ENCODE measurements at regions of chr14 and their contacts with region 1.

Region 1: DNA sequence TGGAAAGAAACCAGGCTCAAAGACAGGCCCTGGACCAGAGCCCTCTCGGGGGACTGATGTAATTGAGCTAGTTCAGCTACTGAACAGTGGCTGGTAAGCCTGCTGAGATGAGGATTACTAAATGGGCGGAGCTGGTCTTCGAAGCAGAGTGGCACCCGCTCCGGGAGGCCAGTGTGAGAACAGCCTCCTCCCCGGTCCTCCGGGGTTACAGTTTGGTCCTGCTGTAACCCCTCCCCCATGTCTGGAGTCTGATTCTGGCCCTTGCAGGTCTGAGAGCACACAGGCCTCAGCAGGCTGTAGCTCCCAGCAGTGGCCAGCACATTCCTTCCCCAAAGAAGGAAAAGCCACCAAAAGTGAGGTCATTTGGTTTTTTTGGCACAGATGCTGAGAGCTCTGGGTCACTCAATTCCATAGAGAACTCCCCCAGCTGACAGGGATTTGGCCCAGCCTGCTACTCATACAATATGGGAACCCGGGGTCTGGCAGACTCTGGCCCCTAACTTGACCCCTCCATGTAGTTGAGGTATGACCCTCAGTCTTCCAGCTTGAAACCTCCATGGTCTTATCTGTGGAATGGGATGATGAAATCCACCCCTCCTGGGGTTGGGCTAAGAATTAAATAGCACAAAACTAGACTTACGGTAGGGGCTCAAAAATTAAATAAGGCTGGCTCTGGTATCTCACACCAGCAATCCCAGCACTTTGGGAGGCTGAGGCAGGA is 39.0 kb downstream of the ACTN1 start:
- DNase-seq: peak in 2 of 10 donors; percentile 35 to 36
- ATAC-seq: peak; percentile 59 to 61
- H3K4me3 Mint-ChIP-seq: peak overlapping the region; percentile 16 to 83 (median 62)
- H3K27ac Mint-ChIP-seq: peak overlapping the region; percentile 78 to 99 (median 92)
- H3K4me1 Mint-ChIP-seq: peaks cover 54 to 99% (median 89%) of the 10 kb centered on the region in 4 donors
- H3K27me3 Mint-ChIP-seq: no peaks in the 10 kb centered on the region

Region 2: DNA sequence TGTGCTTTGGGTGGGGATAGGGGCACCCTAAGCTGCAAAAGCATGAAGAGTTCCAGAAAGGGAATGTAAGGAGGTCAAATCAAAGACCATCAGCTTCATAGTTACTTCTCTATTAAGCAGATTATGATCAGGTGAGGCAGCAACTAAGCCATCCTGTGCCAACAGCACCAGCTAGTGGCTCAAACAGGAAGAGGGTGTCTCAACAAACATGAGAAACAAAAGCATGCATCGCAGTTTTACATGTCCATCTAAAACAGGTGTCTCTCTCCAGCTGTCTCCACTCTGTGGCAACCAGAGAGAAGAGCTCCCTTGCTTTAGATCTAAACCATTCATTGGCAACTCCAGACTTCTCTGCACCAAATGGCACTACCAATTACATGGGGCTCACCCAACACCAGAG is 13.8 kb before region 1 on chr14:
- POLR2A ChIA-PET with region 1: interaction called, 21 read pairs
- DNase-seq: peak in 1 of 10 donors; percentile 43
- ATAC-seq: no peak
- H3K4me3 Mint-ChIP-seq: peak overlapping the region in 5 of 10 donors; percentile 3 to 63 (median 9)
- H3K27ac Mint-ChIP-seq: peak overlapping the region; percentile 49 to 98 (median 90)
- H3K4me1 Mint-ChIP-seq: peaks cover 50 to 96% (median 85%) of the 10 kb centered on the region in 4 donors
- H3K27me3 Mint-ChIP-seq: no peaks in the 10 kb centered on the region

Region 3: DNA sequence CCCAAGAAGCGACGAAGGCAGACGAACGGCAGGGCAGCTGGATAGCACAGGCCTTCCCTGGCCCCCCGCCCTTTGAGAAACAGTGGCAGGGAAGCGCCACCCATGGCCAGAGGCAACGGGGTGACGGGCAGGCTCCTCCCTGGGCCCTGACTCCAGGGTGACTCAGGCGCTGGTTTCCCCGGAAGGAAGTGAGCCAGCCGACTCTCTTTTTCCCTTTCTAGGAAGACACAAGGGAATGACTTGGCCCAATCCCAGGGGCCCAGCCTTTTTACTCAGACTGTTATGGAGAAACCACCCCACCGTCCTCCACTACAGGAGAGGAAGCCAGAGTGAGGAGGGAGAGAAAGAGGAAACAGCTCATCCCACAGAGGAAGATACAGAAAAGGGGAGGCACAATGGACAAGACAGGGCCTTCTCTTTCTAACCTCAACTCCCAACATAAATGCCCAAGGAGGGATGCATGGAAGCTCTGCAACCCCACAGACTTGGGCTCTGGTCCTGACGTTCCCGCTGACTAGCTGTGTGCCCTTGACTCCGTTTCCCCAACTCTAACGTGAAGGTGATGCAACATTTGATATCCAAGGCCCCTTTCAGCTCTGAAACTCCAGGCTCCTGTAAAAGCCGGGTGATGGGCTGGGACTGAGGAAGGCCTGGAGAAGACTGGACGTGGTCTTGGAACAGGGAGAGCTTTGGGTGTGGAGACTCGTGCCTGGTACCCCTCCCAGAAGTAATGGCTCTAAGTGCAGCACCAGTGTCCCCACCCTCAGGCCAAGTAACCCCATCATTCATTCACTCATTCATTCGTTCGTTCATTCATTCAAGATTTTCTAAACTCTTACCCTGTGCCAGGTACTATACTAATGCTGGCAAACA is 11.2 kb after region 1 on chr14:
- POLR2A ChIA-PET with region 1: interaction called, 469 read pairs
- DNase-seq: no peak
- ATAC-seq: no peak
- H3K4me3 Mint-ChIP-seq: peak overlapping the region in 9 of 10 donors; percentile 53 to 90 (median 77)
- H3K27ac Mint-ChIP-seq: peak overlapping the region; percentile 86 to 100 (median 95)
- H3K4me1 Mint-ChIP-seq: peaks cover 60 to 94% (median 93%) of the 10 kb centered on the region in 4 donors
- H3K27me3 Mint-ChIP-seq: no peaks in the 10 kb centered on the region

Region 4: DNA sequence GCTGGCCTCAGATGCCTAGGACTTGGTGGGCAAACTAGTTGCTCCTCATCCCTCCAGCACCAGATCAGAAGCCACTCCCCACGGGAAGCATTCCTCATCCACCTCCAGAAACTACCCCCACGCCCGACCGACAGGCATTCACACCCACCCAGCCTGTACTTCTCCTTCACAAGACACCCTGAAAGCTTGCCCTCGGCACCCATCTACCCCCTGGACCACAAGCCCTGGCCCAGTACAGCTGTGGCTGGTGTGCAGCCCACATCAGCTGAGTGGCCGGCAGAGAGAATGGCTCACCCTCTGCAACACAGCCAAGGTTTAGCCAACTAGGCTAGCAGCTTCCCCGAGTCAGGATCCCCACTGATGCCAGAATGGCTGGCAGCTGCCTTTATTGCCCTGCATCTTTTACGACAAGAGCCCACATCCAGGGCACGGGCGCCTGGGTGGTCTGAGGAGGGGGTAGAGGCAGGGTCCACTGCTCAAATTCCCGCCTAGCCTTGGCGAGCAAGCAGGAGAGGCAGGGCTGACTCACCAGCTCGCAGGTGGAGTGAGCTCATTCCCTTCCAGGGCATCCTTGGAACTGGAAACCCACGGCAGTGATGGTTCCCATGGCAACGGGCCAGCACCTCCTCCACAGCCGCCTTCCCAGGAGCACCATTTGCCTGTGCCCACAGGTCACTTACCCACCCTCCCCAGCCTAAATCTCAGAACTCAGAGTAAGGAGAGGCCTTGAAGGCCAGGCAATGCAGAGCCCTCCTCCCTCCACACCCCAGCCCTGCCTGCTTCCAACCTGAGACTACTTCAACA is 21.9 kb after region 1 on chr14:
- POLR2A ChIA-PET with region 1: interaction called, 469 read pairs
- DNase-seq: no peak
- ATAC-seq: no peak
- H3K4me3 Mint-ChIP-seq: peak overlapping the region in 8 of 10 donors; percentile 23 to 94 (median 67)
- H3K27ac Mint-ChIP-seq: peak overlapping the region; percentile 93 to 100 (median 96)
- H3K4me1 Mint-ChIP-seq: peaks cover 50 to 98% (median 96%) of the 10 kb centered on the region in 4 donors
- H3K27me3 Mint-ChIP-seq: no peaks in the 10 kb centered on the region

Region 5: DNA sequence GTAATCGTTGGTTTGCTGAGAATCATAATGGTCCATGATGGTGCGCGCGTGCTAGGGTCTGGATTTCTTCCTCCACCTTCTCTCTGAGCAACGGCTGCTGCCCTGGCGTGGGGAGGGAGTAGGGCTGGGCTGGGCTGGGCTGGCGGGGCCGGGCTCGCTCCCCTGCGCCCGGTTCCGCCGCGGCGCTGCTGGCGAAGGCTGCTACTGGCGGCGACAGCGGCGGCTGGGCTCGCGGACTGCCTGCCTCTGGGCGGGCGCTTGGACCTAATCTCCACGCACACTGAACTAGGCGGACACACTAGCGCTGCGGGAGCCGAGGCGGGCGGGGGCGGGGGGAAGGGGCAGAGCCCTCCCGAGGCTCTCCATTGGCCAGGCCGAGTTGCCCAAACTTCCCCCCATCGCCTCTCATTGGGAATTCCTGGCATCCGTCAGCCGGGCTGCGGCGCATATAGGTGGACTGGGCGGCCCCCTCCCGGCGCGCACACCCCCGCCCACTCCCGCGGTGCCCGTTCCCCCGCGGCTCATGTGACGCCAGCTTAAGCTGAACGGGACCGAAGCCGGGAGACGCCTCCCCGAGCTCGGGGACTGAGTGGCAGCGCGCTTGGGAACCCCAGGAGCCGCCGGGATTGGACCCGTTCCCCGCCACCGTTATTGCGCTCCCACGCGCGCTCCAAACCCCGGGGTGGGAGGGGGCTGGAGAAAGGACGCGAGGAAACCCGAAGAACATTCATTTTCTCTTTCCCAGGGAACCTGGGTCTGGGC is 39.1 kb after region 1 on chr14 and contains the start of gene ACTN1:
- POLR2A ChIA-PET with region 1: interaction called, 446 read pairs
- DNase-seq: peak; percentile 32 to 86 (median 74)
- ATAC-seq: peak; percentile 48 to 53
- H3K4me3 Mint-ChIP-seq: peak within 1 kb of the TSS; percentile 92 to 99 (median 96)
- H3K27ac Mint-ChIP-seq: peak within 1 kb of the TSS; percentile 92 to 100 (median 100)
- H3K4me1 Mint-ChIP-seq: peaks cover 38 to 60% (median 52%) of the 10 kb centered on the region in 4 donors
- H3K27me3 Mint-ChIP-seq: no peaks in the 10 kb centered on the region
- polyA plus RNA-seq, gene ACTN1: 144 to 436 (median 267) TPM

Measured in naive thymus-derived CD8-positive, alpha-beta T cell (primary cell).